ENCODE measurements at regions of chr12 and their contacts with region 1.

Region 1: DNA sequence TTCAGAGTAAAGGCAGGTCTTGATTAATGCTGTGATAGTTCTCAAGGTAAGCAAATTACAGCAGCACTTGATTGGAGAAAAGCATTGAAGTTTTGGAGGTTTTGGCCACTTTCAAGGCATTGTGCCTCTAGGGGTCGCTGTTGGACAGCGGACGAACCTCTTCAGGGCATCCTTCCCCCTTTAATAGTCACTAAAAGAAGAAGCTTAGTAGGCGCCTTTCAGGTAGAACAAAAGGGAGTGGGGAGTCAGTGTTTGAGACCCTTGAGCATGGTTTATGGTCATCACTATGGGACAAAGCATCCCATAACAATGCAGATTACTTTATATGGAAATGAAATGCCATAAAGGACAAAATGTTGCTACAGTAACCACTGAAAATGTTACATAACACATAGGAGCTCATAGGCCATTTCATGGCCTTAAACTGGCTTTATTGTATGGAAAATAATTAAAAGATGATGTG is 199.5 kb upstream of the DCN start:
- DNase-seq: peak; percentile 7 to 75
- ATAC-seq: peak; percentile 64 to 89; a peak in 5 of 6 replicates
- H3K4me3 ChIP-seq: no peak overlapping the region
- H3K27ac ChIP-seq: peak overlapping the region; percentile 8 to 24; a peak in 1 of 6 replicates
- H3K4me1 ChIP-seq: peaks cover 4% of the 10 kb centered on the region; the same call in 1 of the 3 replicates
- CTCF ChIP-seq: peak; percentile 92
- EP300 ChIP-seq: no peak
- POLR2A ChIP-seq: no peak
- RAD21 ChIP-seq: peak; percentile 96 to 97

Region 2: GRCh38 chr12:91367234-91367849 is 14.8 kb before region 1 on chr12:
- CTCF ChIA-PET with region 1: interaction called, 32 read pairs
- POLR2A ChIA-PET with region 1: no interaction called
- DNase-seq: peak; percentile 23 to 29
- ATAC-seq: peak; percentile 66 to 74; a peak in 4 of 6 replicates
- H3K4me3 ChIP-seq: no peak overlapping the region
- H3K27ac ChIP-seq: no peak overlapping the region
- H3K4me1 ChIP-seq: no peaks in the 10 kb centered on the region
- CTCF ChIP-seq: peak; percentile 61
- EP300 ChIP-seq: no peak
- POLR2A ChIP-seq: no peak
- RAD21 ChIP-seq: peak; percentile 42 to 48; a peak in 4 of 5 replicates

Region 3: DNA sequence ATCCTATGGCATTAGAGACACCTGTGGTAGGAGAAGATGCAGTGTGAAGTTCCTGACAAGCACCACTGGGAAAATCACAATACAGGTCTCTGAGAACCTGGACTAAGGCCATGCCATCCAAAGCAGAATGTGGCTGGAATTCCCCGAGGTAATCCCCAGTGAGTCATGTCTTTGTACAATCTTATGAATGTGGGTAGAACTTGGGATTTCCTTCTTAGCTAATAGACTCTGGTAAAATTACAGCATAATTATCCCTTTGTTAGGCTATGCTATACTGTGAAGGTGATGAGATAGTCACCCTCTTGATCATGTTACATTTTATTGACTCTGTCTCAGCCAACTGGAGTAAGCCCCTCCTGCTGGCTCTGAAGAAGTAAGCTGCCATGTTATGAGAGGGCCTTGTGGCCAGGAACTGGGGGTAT is 24.8 kb after region 1 on chr12:
- CTCF ChIA-PET with region 1: interaction called, 14 read pairs
- POLR2A ChIA-PET with region 1: no interaction called
- DNase-seq: peak; percentile 20 to 69
- ATAC-seq: peak; percentile 85 to 86
- H3K4me3 ChIP-seq: no peak overlapping the region
- H3K27ac ChIP-seq: peak overlapping the region in 1 of 2 experiments; percentile 28; a peak in 1 of 6 replicates
- H3K4me1 ChIP-seq: peaks cover 6% of the 10 kb centered on the region; the same call in 2 of the 3 replicates
- CTCF ChIP-seq: no peak
- EP300 ChIP-seq: no peak
- POLR2A ChIP-seq: no peak
- RAD21 ChIP-seq: no peak

Region 4: DNA sequence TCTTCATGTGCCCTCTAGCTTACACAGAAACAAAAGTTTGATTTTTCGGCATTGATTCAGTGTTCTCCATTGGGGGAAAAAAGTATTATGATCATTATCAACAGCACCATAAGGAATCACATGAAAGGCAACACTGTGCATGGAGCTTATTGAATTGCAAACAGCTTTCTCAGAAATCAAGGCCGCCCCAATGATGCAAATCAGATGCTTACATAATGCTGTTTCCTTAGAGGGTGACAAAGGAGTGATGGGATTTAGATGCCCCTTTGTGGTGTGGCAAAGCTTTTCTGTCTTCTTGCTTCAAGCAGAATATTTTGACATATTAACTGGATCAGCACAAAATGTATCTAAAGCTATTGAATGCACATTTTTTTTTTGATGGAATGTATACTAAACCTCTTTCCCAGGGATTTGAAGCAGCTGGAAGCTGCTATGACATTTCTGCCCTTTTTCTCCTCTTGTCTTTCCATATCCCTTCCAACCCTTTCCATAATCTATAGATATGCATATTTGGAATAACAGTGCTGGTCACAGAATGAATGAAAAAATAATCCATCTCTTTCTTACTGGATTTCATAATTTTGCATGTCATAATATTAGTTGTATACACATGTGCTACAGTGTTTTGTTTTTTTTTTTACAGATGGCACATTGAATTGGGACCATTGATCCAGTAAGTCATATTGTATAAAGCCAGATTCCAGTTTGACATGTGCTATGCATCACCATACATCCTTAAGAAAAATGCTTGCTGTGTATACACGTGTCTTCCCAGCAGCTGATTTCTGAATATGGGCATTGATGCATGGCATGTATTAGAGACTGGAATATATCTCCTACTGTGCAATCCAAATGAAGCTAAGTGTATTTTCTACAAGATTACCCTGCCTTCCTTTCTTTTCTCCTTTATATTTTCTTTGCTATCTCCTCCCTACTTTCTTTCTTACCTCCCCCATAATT is 60.2 kb after region 1 on chr12:
- CTCF ChIA-PET with region 1: no interaction called
- POLR2A ChIA-PET with region 1: no interaction called
- DNase-seq: no peak
- ATAC-seq: no peak
- H3K4me3 ChIP-seq: no peak overlapping the region
- H3K27ac ChIP-seq: no peak overlapping the region
- H3K4me1 ChIP-seq: no peaks in the 10 kb centered on the region
- CTCF ChIP-seq: no peak
- EP300 ChIP-seq: no peak
- POLR2A ChIP-seq: no peak
- RAD21 ChIP-seq: no peak

Region 5: GRCh38 chr12:92136965-92137721 is 755.0 kb after region 1 on chr12:
- CTCF ChIA-PET with region 1: interaction called, 17 read pairs
- POLR2A ChIA-PET with region 1: interaction called, 33 read pairs
- DNase-seq: peak; percentile 45 to 69
- ATAC-seq: peak; percentile 33 to 43; a peak in 3 of 6 replicates
- H3K4me3 ChIP-seq: peak overlapping the region; percentile 91
- H3K27ac ChIP-seq: peak overlapping the region; percentile 85 to 92
- H3K4me1 ChIP-seq: peaks cover 74% of the 10 kb centered on the region
- CTCF ChIP-seq: no peak
- EP300 ChIP-seq: peak; percentile 66 to 83; a peak in 2 of 5 replicates
- POLR2A ChIP-seq: no peak
- RAD21 ChIP-seq: peak in 1 of 2 experiments; percentile 3; a peak in 1 of 5 replicates

Region 6: DNA sequence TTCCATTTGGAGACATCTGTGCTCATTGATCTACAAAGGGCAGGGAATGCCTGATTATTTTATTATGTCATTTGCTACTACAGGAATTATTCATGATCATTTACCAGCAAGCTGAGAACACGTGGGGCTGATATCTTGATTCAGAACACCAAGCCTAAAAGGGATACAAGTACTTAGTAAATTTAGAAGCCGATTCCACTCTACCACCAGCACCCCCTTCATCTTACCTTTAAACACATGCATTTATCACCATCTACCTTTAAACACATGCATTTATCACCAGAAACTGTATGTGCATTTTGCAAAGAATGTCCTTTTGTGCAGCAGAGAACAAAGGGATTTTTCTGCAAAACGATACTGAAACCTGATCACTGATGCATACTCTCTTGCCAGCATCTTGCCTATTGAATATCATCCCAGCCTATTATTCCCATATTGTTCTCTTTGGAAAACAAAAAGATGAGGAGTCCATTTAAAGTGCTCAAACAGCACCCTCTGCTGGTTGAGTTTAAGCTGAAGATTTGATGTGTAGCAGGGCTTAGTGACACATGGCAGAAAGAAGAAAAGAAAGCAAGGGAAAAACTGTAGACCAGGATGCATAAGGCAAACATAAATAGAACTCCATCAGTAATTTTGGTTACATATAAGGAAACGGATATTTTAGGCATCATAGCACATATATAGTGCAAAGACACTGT is 1188.1 kb after region 1 on chr12:
- CTCF ChIA-PET with region 1: interaction called, 35 read pairs
- POLR2A ChIA-PET with region 1: no interaction called
- DNase-seq: peak; percentile 57 to 88
- ATAC-seq: peak; percentile 78 to 91
- H3K4me3 ChIP-seq: no peak overlapping the region
- H3K27ac ChIP-seq: peak overlapping the region; percentile 49 to 66
- H3K4me1 ChIP-seq: peaks cover 17% of the 10 kb centered on the region
- CTCF ChIP-seq: peak; percentile 97
- EP300 ChIP-seq: no peak
- POLR2A ChIP-seq: no peak
- RAD21 ChIP-seq: peak; percentile 94 to 97

Region 7: DNA sequence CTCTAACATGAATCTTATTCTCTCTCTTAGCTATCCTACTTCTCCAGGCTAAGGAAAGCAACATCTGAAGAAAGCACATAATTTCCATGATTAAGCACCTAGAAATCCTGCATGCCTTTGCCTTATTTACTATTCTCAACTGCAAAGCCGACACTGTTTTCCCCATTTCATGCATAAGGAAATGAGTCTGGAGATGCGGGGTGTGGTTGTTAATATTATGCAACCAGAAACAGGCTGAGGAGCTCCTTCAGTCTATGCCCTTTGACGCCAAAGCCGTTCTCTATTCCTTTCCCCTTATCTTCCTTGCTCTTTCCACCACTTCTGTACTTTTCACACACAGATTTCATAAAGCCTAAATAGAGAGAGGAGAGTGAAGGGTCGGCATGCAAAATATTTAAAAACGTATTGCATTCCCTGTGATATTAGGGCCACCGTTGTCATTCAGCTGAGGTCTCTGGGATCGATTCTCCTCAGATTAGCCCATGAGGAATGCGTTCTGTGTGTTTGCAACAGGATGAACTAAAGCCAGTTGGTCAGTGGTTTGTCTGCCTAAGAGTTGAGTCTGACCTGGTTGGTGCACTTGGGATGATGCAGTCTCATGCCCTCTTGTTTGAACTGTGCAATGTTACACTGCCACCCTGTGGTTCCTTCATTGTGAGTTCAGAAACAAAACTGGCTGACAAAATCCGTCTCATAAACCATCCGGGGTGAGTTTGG is 1267.6 kb after region 1 on chr12:
- CTCF ChIA-PET with region 1: interaction called, 32 read pairs
- POLR2A ChIA-PET with region 1: no interaction called
- DNase-seq: peak; percentile 72 to 93
- ATAC-seq: peak; percentile 99
- H3K4me3 ChIP-seq: no peak overlapping the region
- H3K27ac ChIP-seq: peak overlapping the region; percentile 79 to 83
- H3K4me1 ChIP-seq: peaks cover 18% of the 10 kb centered on the region
- CTCF ChIP-seq: peak; percentile 92
- EP300 ChIP-seq: no peak
- POLR2A ChIP-seq: no peak
- RAD21 ChIP-seq: peak; percentile 97

Measured in A549 (cell line).